Activated naive CD4-positive, alpha-beta T cell treated with anti-CD3 and anti-CD28 coated beads, Interleukin-2, amount 10 ng/mL, durations not matched to agents 7 days and 5 days (primary cell): ENCODE measurements at regions of chr17 and their contacts with region 1.

Region 1: DNA sequence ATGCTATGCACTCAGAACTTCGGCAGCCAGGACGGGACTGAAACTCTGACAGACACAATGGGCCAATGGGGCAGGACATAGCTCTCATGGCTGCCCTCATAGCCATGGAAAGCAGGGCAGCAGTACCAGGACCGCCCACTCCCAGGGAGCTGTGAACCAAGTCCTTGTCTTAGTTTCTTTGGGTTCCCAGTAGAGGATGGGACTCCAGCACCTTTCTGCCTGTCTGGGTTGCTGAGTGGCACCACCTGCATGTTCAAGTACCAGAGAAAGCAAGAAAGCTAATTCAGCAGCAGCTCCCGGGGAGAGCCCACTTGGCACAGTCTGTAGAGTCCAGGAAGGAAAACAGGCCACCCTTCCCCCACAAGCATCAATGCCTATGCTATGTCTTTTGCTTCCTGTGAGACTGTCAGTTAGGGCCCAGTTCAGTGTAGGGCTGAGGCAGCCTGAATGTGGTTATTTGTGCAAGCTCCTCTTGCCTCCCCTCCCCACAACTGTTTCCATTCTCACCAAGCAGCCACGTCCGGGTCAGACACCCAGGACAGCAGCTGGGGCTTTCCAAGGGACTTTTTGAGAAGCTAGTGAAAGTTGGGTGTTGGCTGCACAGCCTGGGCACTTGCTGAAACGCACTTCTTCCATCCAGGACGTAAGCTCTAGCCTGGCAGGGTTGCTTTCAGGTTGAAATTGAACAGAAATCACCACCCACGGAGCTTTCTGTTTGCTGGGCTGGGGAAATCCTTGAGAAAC is 7.8 kb downstream of the SUPT4H1 start:
- DNase-seq: peak; percentile 90
- H3K4me3 Mint-ChIP-seq: peak overlapping the region; percentile 99
- H3K27ac Mint-ChIP-seq: peak overlapping the region; percentile 99
- H3K4me1 Mint-ChIP-seq: peaks cover 85% of the 10 kb centered on the region
- H3K27me3 Mint-ChIP-seq: no peaks in the 10 kb centered on the region

Region 2: DNA sequence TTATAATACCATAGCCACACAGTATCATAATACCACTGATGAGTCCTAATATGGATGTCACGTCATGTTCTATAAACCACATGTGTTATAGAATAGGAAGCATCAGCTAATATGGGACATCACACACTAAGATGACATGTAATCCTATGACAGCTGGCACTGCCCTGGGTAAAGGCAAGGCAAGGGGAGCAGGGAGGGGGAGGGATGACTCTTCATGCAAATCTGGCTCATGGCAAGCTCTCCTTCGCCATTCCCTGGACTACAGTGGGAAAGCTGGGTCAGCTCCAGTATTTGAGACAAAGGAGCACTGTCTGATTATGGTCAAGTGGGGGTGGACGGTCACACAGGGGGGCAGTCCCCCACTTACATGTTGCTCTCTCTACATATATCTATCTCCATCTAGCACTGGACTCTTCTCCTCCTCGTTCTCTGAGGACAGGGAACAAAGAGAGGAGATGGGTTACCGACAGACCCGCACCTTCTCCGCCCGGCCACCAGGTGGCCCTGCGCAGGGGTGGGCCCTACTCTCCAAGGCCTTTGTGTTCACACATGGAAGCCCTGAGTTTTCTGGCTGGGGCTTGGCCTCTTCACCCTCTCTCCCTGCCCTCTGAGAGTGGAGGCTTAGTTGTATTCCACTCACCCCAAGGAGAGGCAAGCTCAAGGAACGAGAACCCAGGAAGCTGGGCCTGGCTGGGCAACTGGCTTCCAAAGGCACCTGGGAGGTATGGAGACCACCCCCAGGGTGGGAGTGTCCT is 40.1 kb before region 1 on chr17:
- CTCF ChIA-PET with region 1: interaction called, 29 read pairs
- DNase-seq: peak; percentile 72
- H3K4me3 Mint-ChIP-seq: no peak overlapping the region
- H3K27ac Mint-ChIP-seq: no peak overlapping the region
- H3K4me1 Mint-ChIP-seq: no peaks in the 10 kb centered on the region
- H3K27me3 Mint-ChIP-seq: no peaks in the 10 kb centered on the region

Region 3: GRCh38 chr17:58329035-58329809 is 15.0 kb before region 1 on chr17:
- CTCF ChIA-PET with region 1: interaction called, 114 read pairs
- DNase-seq: peak; percentile 85
- H3K4me3 Mint-ChIP-seq: peak overlapping the region; percentile 99
- H3K27ac Mint-ChIP-seq: peak overlapping the region; percentile 87
- H3K4me1 Mint-ChIP-seq: peaks cover 30% of the 10 kb centered on the region
- H3K27me3 Mint-ChIP-seq: peaks cover 38% of the 10 kb centered on the region

Region 4: GRCh38 chr17:58360296-58361063 is 16.3 kb after region 1 on chr17:
- CTCF ChIA-PET with region 1: no interaction called
- DNase-seq: no peak
- H3K4me3 Mint-ChIP-seq: no peak overlapping the region
- H3K27ac Mint-ChIP-seq: no peak overlapping the region
- H3K4me1 Mint-ChIP-seq: peaks cover 3% of the 10 kb centered on the region
- H3K27me3 Mint-ChIP-seq: no peaks in the 10 kb centered on the region

Region 5: GRCh38 chr17:58432806-58433572 is 88.8 kb after region 1 on chr17:
- CTCF ChIA-PET with region 1: no interaction called
- DNase-seq: no peak
- H3K4me3 Mint-ChIP-seq: no peak overlapping the region
- H3K27ac Mint-ChIP-seq: no peak overlapping the region
- H3K4me1 Mint-ChIP-seq: no peaks in the 10 kb centered on the region
- H3K27me3 Mint-ChIP-seq: no peaks in the 10 kb centered on the region